ENCODE measurements at regions of chr6 and their contacts with region 1.

Region 1: GRCh38 chr6:42726485-42727086 is 4.2 kb upstream of the PRPH2 start:
- DNase-seq: peak; percentile 85
- CTCF ChIP-seq: peak; percentile 79

Region 2: DNA sequence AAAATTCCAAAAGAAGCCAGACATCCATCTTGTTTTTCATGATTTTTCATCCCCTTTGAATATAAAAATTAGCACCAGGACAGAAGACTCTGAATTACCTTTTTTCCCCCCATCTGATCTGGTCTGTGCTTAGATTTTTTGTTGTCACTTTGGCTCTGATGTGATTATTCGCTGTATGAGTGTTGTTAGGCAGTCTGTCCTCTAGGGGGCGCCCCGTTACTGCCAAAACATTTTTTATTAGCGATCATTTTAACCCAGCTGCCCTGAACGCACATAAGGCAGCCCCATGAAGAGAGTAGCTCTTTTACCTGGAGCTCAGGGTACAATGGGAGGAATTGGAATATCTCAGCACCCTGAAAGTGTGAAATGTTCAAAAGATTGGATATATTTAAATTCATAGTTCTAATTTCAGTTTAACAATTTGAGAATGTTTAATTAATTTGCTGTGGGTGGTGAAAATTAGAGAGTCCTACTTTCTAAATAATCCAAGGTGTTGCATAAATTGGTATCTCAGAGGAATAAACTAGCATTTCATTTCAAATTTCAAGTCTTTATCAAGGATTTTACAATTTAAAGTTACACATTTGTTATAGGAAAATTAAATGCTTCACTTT is 64.9 kb before region 1 on chr6:
- CTCF ChIA-PET with region 1: interaction called, 17 read pairs
- POLR2A ChIA-PET with region 1: no interaction called
- DNase-seq: peak; percentile 59
- CTCF ChIP-seq: peak; percentile 78

Region 3: DNA sequence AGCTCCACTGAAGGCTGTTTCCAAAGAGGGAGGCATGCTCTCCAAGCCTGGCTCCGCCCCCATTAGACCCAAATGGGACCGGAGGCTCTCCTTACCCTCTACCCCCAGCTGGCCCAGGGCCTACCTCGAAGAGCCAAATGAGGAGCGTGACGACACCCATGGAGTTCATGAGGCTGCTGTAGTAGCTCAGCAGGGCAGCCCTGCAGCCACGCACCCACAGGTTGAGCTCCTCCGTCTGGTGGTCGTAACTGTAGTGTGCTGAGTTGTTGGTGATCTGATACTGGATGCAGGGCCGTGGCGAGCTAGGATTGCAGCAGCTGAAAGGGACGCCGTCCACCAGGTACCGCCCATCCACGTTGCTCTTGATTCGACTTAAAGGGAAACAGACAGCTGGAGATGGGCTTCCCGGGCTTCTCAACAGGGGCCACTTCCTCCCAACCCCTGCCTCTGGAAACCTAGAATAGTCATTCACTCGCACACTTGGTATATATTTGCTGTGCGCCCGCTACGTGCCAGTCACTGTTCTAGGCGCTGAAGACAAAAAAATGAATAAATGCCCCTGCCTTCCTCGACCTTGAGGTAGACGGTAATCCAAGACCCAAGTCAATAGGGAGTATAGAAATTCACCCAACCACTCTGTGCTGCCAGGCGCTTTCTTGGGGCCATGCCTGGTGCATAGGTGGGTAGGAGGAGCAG is 22.2 kb before region 1 on chr6:
- CTCF ChIA-PET with region 1: interaction called, 12 read pairs
- POLR2A ChIA-PET with region 1: no interaction called
- DNase-seq: no peak
- CTCF ChIP-seq: no peak

Region 4: GRCh38 chr6:42745707-42746462 is 19.3 kb after region 1 on chr6 and contains the start of gene TBCC:
- CTCF ChIA-PET with region 1: interaction called, 84 read pairs
- POLR2A ChIA-PET with region 1: interaction called, 6 read pairs
- DNase-seq: peak; percentile 98
- CTCF ChIP-seq: no peak

Region 5: GRCh38 chr6:42879372-42880239 is 153.0 kb after region 1 on chr6 and contains the start of gene RPL7L1:
- CTCF ChIA-PET with region 1: interaction called, 13 read pairs
- POLR2A ChIA-PET with region 1: no interaction called
- DNase-seq: peak; percentile 83
- CTCF ChIP-seq: no peak